A673 (cell line): ENCODE measurements at regions of chr20 and their contacts with region 1.

Region 1: DNA sequence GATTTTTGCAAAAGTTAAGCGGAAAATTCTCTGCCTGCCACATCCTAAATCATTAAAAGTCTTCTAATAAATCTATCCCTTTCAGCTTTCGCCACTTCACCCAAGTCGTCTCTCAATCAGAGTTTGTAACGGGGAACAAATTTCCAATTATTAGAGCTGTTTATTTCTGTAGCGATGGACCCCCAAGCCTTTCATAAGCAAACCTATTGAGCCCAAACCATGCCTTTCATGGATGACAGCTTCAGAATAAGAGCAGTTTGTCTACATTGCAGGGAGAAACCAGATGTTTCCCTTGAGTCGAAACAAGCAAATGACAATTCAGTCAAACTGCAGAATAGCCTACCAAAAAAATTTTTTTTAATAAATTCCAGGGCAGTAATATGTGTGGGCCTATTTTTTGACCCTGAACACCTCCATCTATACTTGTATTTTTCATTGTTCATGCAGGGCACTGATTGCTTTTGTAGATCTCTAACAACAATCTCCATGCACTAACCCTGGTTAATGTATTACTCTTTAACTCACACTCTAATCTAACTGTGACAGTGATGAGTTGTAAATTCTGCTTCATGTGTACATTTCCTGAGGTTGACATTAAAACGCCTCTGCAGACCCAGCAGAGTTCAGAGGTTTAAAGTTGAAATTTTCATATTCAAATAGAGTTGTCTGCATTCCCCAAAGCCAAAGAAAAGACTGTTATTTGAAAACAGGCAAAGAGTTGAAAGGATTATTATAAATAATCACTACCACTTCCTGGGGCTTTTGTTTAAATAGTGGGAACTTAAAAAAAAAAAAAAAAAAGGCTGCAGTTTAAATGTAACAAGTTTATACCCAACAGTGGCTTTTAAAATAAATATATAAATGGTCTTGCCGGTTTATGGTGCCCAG is 64.5 kb downstream of the ATP9A start:
- DNase-seq: peak; percentile 87
- H3K4me3 ChIP-seq: no peak overlapping the region
- H3K27ac ChIP-seq: peak overlapping the region; percentile 46
- H3K4me1 ChIP-seq: peaks cover 56% of the 10 kb centered on the region
- H3K27me3 ChIP-seq: no peaks in the 10 kb centered on the region
- CTCF ChIP-seq: no peak

Region 2: DNA sequence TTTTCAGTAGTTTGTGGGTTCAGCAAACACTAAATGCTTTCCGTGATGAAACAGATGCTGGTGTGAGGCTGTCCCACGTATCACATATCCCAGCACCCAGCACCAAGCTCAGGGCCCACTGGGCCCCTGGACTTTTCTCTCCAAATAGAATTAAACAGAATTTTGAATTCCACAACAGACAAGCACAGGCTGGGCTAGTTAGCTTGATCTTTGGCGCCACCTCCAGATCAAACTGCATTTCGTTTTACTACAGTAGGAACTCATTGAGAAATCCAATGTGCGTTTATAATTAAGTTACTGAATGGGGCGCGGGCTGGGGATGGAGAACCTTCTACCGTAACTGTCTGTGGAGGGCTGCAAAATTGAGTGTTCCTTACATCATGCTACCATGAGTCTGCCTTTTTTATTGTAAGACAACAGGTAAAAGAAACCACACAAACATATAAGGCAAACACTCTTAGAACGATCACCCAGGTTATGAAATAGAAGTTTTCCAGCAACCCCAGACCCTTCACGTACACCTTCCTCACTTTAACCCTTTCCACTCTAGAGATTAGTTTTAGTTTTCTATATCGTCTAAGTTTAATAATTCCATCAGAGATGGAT is 380.1 kb after region 1 on chr20:
- CTCF ChIA-PET with region 1: interaction called, 3 read pairs
- POLR2A ChIA-PET with region 1: no interaction called
- intact Hi-C with region 1: loop called (anchors 2 kb)
- DNase-seq: peak; percentile 86
- H3K4me3 ChIP-seq: no peak overlapping the region
- H3K27ac ChIP-seq: no peak overlapping the region
- H3K4me1 ChIP-seq: peaks cover 20% of the 10 kb centered on the region
- H3K27me3 ChIP-seq: no peaks in the 10 kb centered on the region
- CTCF ChIP-seq: peak; percentile 85